ENCODE measurements at regions of chr9 and their contacts with region 1.

Region 1: GRCh38 chr9:2072752-2073405 is 57.7 kb downstream of the SMARCA2 start:
- DNase-seq: no peak
- H3K4me3 ChIP-seq: no peak overlapping the region
- H3K27ac ChIP-seq: no peak overlapping the region
- H3K4me1 ChIP-seq: no peaks in the 10 kb centered on the region
- H3K27me3 ChIP-seq: no peaks in the 10 kb centered on the region
- CTCF ChIP-seq: no peak
- POLR2A ChIP-seq: no peak

Region 2: DNA sequence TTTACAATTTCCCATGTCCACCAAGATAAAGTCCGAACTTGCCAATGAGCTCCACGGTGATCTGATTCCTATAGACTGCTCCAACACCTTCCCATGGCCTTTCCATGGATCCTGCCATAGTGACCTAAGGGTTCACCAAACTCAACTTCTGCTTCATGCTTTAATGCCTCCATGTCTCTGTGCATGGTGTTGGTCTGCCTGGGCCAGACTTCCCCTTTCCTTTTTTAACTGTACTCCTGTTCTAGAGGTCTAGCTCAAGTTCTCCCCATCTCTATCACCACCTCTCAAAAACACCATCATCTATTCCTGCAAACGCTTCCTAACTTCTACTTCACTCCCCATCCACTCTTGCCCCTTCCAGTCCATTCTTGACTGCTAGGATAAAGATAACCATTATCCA is 72.6 kb before region 1 on chr9:
- intact Hi-C with region 1: loop called (anchors 10 kb)
- DNase-seq: no peak
- H3K4me3 ChIP-seq: no peak overlapping the region
- H3K27ac ChIP-seq: no peak overlapping the region
- H3K4me1 ChIP-seq: no peaks in the 10 kb centered on the region
- H3K27me3 ChIP-seq: no peaks in the 10 kb centered on the region
- CTCF ChIP-seq: no peak
- POLR2A ChIP-seq: no peak

Region 3: GRCh38 chr9:2418619-2419018 is 345.7 kb after region 1 on chr9:
- intact Hi-C with region 1: no loop called
- DNase-seq: no peak
- H3K4me3 ChIP-seq: no peak overlapping the region
- H3K27ac ChIP-seq: no peak overlapping the region
- H3K4me1 ChIP-seq: peaks cover 0 to 4% of the 10 kb centered on the region in 2 donors
- H3K27me3 ChIP-seq: no peaks in the 10 kb centered on the region
- CTCF ChIP-seq: no peak
- POLR2A ChIP-seq: no peak